Left cardiac atrium (tissue), 4 donors: ENCODE measurements at regions of chr18 and their contacts with region 1.

Region 1: DNA sequence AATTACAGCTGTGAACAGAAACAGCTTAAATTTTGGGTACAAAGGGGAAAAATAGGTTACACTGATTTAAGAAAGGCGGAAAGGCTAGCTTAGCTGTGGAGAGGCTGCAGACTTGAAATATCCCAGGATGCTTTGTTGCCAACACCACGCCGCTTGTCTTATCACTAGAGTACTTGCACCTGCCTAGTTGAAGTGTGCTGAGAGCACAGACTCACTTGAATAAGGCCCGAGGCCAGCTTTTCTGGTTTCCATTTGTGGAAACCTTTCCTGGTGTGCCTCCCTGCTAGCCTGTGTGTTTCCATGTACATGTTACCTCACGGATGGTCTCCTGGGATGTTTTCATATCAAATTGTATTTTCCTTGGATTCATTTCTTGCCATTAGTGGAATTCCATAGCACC is 3.2 kb downstream of the CABLES1 start:
- DNase-seq: peak; percentile 43
- ATAC-seq: peak in 1 of 2 donors; percentile 25

Region 2: GRCh38 chr18:23357996-23358594 is 219.6 kb after region 1 on chr18:
- intact Hi-C with region 1: loop called (anchors 2 to 5 kb)
- DNase-seq: peak; percentile 79
- ATAC-seq: peak; percentile 78 to 82